B cell (primary cell): ENCODE measurements at regions of chr14 and their contacts with region 1.

Region 1: DNA sequence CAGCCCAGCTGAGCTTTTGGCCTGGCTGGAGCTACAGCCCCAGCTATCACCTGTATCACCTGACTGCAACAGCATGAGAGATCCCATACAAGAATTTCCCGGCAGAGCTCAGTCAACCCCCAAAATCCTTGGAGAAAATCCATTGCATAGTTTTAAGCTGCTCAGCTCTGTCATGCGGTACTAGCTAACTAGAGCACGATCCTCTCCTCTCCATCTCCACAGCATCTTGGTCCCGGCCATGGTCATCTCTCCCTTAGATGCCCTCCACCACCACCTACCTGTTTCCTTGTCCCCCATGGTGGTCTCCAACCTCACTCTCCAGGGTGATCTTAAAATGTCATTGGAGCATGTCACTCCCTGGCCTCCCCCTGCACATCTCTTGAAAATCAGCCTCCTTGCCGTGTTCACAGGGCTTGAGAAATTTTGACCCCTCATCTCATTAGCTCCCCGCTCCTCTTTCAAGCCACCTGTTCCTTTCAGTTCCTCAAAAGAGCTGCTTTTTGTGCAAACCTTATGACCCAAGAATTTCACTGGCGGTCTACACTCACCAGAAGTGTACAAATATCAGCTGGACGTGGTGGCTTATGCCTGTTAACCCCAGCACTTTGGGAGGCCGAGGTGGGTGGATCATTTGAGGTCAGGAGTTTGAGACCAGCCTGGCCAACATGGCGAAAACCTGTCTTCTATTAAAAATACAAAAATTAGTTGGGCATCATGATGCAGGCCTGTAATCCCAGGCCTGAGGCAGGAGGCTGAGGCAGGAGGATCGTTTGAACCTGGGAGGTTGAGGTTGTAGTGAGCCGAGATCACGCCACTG is 8.1 kb upstream of the CLMN start:
- DNase-seq: peak; percentile 88
- ATAC-seq: peak; percentile 86
- H3K4me3 ChIP-seq: peak overlapping the region in 4 of 5 experiments; percentile 20 to 42 (median 28)
- H3K4me3 Mint-ChIP-seq: peak overlapping the region; percentile 84
- H3K27ac ChIP-seq: peak overlapping the region; percentile 71 to 96
- H3K27ac Mint-ChIP-seq: peak overlapping the region; percentile 92
- H3K4me1 ChIP-seq: peaks cover 42 to 46% of the 10 kb centered on the region in 2 donors
- H3K4me1 Mint-ChIP-seq: peaks cover 54% of the 10 kb centered on the region
- H3K27me3 ChIP-seq: no peaks in the 10 kb centered on the region
- H3K27me3 Mint-ChIP-seq: no peaks in the 10 kb centered on the region
- CTCF ChIP-seq: no peak

Region 2: GRCh38 chr14:95395098-95395737 is 67.5 kb after region 1 on chr14:
- CTCF ChIA-PET with region 1: interaction called, 3 read pairs
- POLR2A ChIA-PET with region 1: no interaction called
- intact Hi-C with region 1: loop called (anchors 5 kb)
- DNase-seq: no peak
- ATAC-seq: no peak
- H3K4me3 ChIP-seq: peak overlapping the region in 1 of 5 experiments; percentile 34
- H3K4me3 Mint-ChIP-seq: peak overlapping the region; percentile 24
- H3K27ac ChIP-seq: peak overlapping the region; percentile 77 to 80
- H3K27ac Mint-ChIP-seq: peak overlapping the region; percentile 94
- H3K4me1 ChIP-seq: peaks cover 21 to 26% of the 10 kb centered on the region in 2 donors
- H3K4me1 Mint-ChIP-seq: peaks cover 9% of the 10 kb centered on the region
- H3K27me3 ChIP-seq: no peaks in the 10 kb centered on the region
- H3K27me3 Mint-ChIP-seq: peaks cover 6% of the 10 kb centered on the region
- CTCF ChIP-seq: no peak

Region 3: GRCh38 chr14:95460647-95461478 is 133.1 kb after region 1 on chr14:
- CTCF ChIA-PET with region 1: no interaction called
- POLR2A ChIA-PET with region 1: no interaction called
- intact Hi-C with region 1: no loop called
- DNase-seq: no peak
- ATAC-seq: no peak
- H3K4me3 ChIP-seq: no peak overlapping the region
- H3K4me3 Mint-ChIP-seq: no peak overlapping the region
- H3K27ac ChIP-seq: peak overlapping the region in 1 of 2 donors; percentile 95
- H3K27ac Mint-ChIP-seq: peak overlapping the region; percentile 74
- H3K4me1 ChIP-seq: peaks cover 70 to 71% of the 10 kb centered on the region in 2 donors
- H3K4me1 Mint-ChIP-seq: peaks cover 61% of the 10 kb centered on the region
- H3K27me3 ChIP-seq: no peaks in the 10 kb centered on the region
- H3K27me3 Mint-ChIP-seq: no peaks in the 10 kb centered on the region
- CTCF ChIP-seq: no peak